PC-3 (cell line): ENCODE measurements at regions of chrX and their contacts with region 1.

Region 1: GRCh38 chrX:132226169-132226568 is 6.9 kb upstream of the RAP2C start:
- DNase-seq: peak; percentile 34
- ATAC-seq: no peak
- H3K4me3 ChIP-seq: no peak overlapping the region
- H3K27ac ChIP-seq: no peak overlapping the region
- H3K4me1 ChIP-seq: no peaks in the 10 kb centered on the region
- H3K27me3 ChIP-seq: no peaks in the 10 kb centered on the region
- CTCF ChIP-seq: peak; percentile 59

Region 2: GRCh38 chrX:132367984-132368756 is 142.0 kb after region 1 on chrX:
- CTCF ChIA-PET with region 1: no interaction called
- POLR2A ChIA-PET with region 1: no interaction called
- intact Hi-C with region 1: loop called (anchors 5 kb)
- DNase-seq: peak; percentile 71
- ATAC-seq: peak; percentile 71
- H3K4me3 ChIP-seq: no peak overlapping the region
- H3K27ac ChIP-seq: no peak overlapping the region
- H3K4me1 ChIP-seq: peaks cover 13% of the 10 kb centered on the region
- H3K27me3 ChIP-seq: no peaks in the 10 kb centered on the region
- CTCF ChIP-seq: no peak